GM12878 (cell line): ENCODE measurements at regions of chr11 and their contacts with region 1.

Region 1: DNA sequence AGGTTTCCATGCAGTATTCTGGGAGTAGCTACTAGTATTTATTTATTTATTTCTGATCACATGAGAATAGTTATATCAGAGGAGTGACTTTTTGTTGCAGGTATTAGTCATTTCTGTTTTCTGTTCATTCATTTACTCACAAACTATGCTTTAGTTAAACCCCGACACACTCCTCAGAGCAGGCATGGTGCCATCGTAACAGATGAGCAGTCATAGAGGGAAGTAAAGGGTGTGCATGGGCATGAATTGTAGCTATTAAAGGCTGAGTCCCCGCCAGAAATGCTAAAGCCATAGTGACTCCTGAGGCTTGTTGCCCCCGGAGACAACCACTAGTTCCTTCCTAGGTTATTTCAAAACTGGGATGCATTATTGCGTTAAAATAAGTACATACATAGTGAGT is 10.6 kb downstream of the JHY start:
- DNase-seq: no peak
- ATAC-seq: peak; percentile 90
- H3K4me3 ChIP-seq: no peak overlapping the region
- H3K27ac ChIP-seq: no peak overlapping the region
- H3K4me1 ChIP-seq: no peaks in the 10 kb centered on the region
- H3K27me3 ChIP-seq: no peaks in the 10 kb centered on the region
- CTCF ChIP-seq: no peak
- EP300 ChIP-seq: no peak
- POLR2A ChIP-seq: no peak
- RAD21 ChIP-seq: no peak

Region 2: DNA sequence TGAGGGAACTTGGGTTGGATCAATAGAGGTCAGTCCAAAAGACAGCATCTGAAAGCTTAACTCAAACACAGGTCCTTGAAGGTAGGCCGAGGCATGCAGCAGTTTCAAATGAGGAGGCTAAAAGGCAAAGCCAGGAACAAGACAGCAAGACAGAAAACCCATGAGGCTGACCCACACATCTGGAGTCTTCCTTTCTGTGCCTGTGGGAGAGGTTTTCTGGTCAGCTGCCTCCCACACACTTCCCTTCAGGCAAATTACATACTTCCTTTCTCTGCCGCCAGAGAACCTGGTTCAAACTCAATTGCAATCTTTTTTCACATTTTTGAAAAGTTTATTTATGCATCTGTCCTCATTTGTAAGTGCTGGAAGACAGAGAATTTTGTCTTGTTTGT is 84.7 kb before region 1 on chr11:
- CTCF ChIA-PET with region 1: no interaction called
- POLR2A ChIA-PET with region 1: no interaction called
- RAD21 ChIA-PET with region 1: no interaction called
- SMC1A ChIA-PET with region 1: no interaction called
- in situ Hi-C with region 1: no loop called
- intact Hi-C with region 1: no loop called
- DNase-seq: peak; percentile 66
- ATAC-seq: peak; percentile 81
- H3K4me3 ChIP-seq: no peak overlapping the region
- H3K27ac ChIP-seq: peak overlapping the region; percentile 47; the same call in 1 of the 2 replicates
- H3K4me1 ChIP-seq: peaks cover 18% of the 10 kb centered on the region
- H3K27me3 ChIP-seq: no peaks in the 10 kb centered on the region
- CTCF ChIP-seq: no peak
- EP300 ChIP-seq: no peak
- POLR2A ChIP-seq: no peak
- RAD21 ChIP-seq: no peak

Region 3: GRCh38 chr11:122869622-122870021 is 23.5 kb before region 1 on chr11:
- CTCF ChIA-PET with region 1: interaction called, 10 read pairs
- POLR2A ChIA-PET with region 1: interaction called, 9 read pairs
- RAD21 ChIA-PET with region 1: interaction called, 8 read pairs
- SMC1A ChIA-PET with region 1: interaction called, 146 read pairs
- in situ Hi-C with region 1: no loop called
- intact Hi-C with region 1: no loop called
- DNase-seq: no peak
- ATAC-seq: peak; percentile 62
- H3K4me3 ChIP-seq: no peak overlapping the region
- H3K27ac ChIP-seq: no peak overlapping the region
- H3K4me1 ChIP-seq: no peaks in the 10 kb centered on the region; the same call in 1 of the 2 replicates
- H3K27me3 ChIP-seq: no peaks in the 10 kb centered on the region
- CTCF ChIP-seq: no peak
- EP300 ChIP-seq: no peak
- POLR2A ChIP-seq: no peak
- RAD21 ChIP-seq: no peak